PC-9 (cell line): ENCODE measurements at regions of chr4 and their contacts with region 1.

Region 1: DNA sequence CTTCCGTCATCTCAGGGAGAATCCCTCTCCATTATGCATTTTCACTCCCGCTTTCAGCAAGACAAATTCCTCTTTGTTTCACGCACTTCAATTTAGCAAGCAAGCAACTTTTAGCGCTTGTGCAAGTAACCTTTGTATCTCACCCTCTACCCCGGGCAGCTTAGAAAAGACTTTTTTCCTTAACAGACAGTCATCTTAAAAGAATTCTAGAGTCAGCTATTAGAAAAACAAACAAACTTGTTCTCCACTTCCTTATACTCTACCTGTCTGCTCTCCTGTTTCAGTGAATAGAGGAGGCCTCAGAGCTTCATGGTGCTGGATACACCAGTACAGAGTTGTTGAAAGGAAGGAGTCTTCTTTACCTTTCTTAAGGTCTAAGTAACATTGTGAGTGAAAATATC is 12.1 kb downstream of the TIGD2 start:
- DNase-seq: peak; percentile 27 to 90
- H3K4me3 ChIP-seq: no peak overlapping the region
- H3K27ac ChIP-seq: peak overlapping the region; percentile 71
- H3K4me1 ChIP-seq: peaks cover 30% of the 10 kb centered on the region
- H3K27me3 ChIP-seq: no peaks in the 10 kb centered on the region
- CTCF ChIP-seq: no peak

Region 2: DNA sequence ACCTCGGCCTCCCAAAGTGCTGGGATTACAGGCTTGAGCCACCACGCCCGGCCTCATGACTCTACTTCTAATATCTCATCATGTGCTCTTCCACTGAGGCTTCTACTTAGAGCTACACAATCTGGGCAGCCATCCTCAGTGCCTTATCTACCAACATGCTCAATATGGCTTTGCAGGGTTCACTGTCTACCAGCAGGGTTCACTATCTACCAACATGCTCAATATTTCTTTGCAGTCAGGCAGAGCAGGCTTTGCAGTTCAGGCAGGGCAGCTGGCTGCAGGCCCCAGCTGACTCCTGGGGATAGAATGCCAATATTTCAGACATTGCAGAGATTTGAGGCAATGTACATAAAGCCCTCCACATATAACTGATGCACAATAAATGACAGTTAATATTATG is 1068.5 kb before region 1 on chr4:
- CTCF ChIA-PET with region 1: no interaction called
- POLR2A ChIA-PET with region 1: no interaction called
- intact Hi-C with region 1: no loop called
- DNase-seq: peak in 1 of 2 experiments; percentile 18
- H3K4me3 ChIP-seq: no peak overlapping the region
- H3K27ac ChIP-seq: no peak overlapping the region
- H3K4me1 ChIP-seq: no peaks in the 10 kb centered on the region
- H3K27me3 ChIP-seq: no peaks in the 10 kb centered on the region
- CTCF ChIP-seq: peak; percentile 58

Region 3: GRCh38 chr4:88919056-88919455 is 204.4 kb before region 1 on chr4:
- CTCF ChIA-PET with region 1: no interaction called
- POLR2A ChIA-PET with region 1: no interaction called
- intact Hi-C with region 1: no loop called
- DNase-seq: no peak
- H3K4me3 ChIP-seq: no peak overlapping the region
- H3K27ac ChIP-seq: no peak overlapping the region
- H3K4me1 ChIP-seq: no peaks in the 10 kb centered on the region
- H3K27me3 ChIP-seq: no peaks in the 10 kb centered on the region
- CTCF ChIP-seq: no peak

Region 4: DNA sequence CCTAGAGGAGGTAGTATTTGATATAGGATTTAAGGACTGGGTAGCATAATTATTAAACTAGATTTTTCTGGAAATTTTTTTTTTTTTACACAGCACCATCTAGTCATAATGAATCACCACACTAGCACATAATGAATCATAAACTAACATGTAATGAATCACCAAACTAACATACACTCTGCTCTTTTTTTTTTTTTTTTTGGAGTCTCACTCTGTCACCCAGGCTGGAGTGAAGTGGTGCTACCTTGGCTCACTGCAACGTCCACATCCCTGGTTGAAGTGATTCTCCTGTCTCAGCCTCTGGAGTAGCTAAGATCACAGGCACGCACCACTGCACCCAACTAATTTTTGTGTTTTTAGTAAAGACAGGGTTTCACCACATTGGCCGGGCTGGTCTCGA is 159.0 kb before region 1 on chr4:
- CTCF ChIA-PET with region 1: no interaction called
- POLR2A ChIA-PET with region 1: no interaction called
- intact Hi-C with region 1: loop called (anchors 2 kb)
- DNase-seq: peak; percentile 1 to 73
- H3K4me3 ChIP-seq: no peak overlapping the region
- H3K27ac ChIP-seq: peak overlapping the region; percentile 87
- H3K4me1 ChIP-seq: peaks cover 56% of the 10 kb centered on the region
- H3K27me3 ChIP-seq: no peaks in the 10 kb centered on the region
- CTCF ChIP-seq: no peak

Region 5: GRCh38 chr4:89164400-89164799 is 40.9 kb after region 1 on chr4:
- CTCF ChIA-PET with region 1: no interaction called
- POLR2A ChIA-PET with region 1: interaction called, 11 read pairs
- intact Hi-C with region 1: no loop called
- DNase-seq: no peak
- H3K4me3 ChIP-seq: no peak overlapping the region
- H3K27ac ChIP-seq: no peak overlapping the region
- H3K4me1 ChIP-seq: no peaks in the 10 kb centered on the region
- H3K27me3 ChIP-seq: no peaks in the 10 kb centered on the region
- CTCF ChIP-seq: no peak